WTC11 (cell line): ENCODE measurements at regions of chr19 and their contacts with region 1.

Region 1: GRCh38 chr19:23273590-23274413 is 23.6 kb upstream of the ZNF724 start:
- DNase-seq: peak; percentile 96
- ATAC-seq: peak; percentile 99
- H3K4me3 Mint-ChIP-seq: peak overlapping the region; percentile 90
- H3K27ac Mint-ChIP-seq: peak overlapping the region; percentile 96
- H3K4me1 Mint-ChIP-seq: peaks cover 29% of the 10 kb centered on the region
- H3K27me3 Mint-ChIP-seq: no peaks in the 10 kb centered on the region
- CTCF ChIP-seq: no peak

Region 2: GRCh38 chr19:23075031-23075760 is 198.6 kb before region 1 on chr19:
- CTCF ChIA-PET with region 1: interaction called, 4 read pairs
- POLR2A ChIA-PET with region 1: interaction called, 18 read pairs
- DNase-seq: peak; percentile 92
- ATAC-seq: peak; percentile 92
- H3K4me3 Mint-ChIP-seq: peak overlapping the region; percentile 83
- H3K27ac Mint-ChIP-seq: peak overlapping the region; percentile 91
- H3K4me1 Mint-ChIP-seq: peaks cover 30% of the 10 kb centered on the region
- H3K27me3 Mint-ChIP-seq: peaks cover 11% of the 10 kb centered on the region
- CTCF ChIP-seq: no peak

Region 3: GRCh38 chr19:23116802-23117571 is 156.8 kb before region 1 on chr19 and contains the start of gene ZNF730:
- CTCF ChIA-PET with region 1: no interaction called
- POLR2A ChIA-PET with region 1: interaction called, 15 read pairs
- DNase-seq: peak; percentile 84
- ATAC-seq: peak; percentile 88
- H3K4me3 Mint-ChIP-seq: peak within 1 kb of the TSS; percentile 90
- H3K27ac Mint-ChIP-seq: peak within 1 kb of the TSS; percentile 99
- H3K4me1 Mint-ChIP-seq: peaks cover 24% of the 10 kb centered on the region
- H3K27me3 Mint-ChIP-seq: no peaks in the 10 kb centered on the region
- CTCF ChIP-seq: no peak
- total RNA-seq, gene ZNF730: 32.2 to 38.0 TPM (median 32.6 TPM) in 3 replicates

Region 4: DNA sequence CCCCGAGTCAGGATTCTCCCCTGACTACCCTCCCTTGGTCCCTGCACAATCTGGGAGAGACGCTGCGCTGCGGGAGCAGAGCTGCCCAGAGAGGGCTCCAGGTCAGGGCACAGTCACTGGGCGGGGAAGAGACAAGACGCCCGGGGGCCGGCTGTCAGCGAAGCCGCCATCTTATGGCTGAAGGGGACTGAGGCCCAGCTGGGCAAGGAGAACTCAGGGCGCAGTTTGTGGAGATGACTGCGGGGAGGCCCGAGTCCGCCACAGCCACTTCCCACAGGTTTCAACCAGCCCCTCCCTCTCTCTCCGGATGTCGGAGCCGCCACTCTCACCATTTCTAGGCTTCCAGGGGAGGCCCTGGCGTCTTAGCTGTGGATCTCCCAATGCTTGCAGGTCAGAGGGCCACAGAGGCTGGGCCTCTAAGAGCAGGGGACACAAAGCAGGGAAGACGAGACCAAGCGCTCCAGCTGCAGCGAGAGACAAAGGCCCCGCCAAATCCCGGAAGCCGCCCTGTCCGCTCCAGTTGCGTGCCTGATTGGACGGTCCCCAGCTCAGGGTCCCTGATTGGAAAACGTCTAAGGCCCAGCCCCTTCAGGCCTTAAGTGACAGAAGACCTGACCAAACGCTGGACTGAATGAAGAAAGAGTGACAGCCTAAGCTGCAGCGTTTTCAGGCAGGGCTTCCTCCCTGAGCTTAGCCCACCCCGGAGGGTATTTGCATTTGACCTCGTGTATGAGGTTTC is 23.7 kb before region 1 on chr19 and contains the start of gene ZNF724:
- CTCF ChIA-PET with region 1: interaction called, 6 read pairs
- POLR2A ChIA-PET with region 1: interaction called, 42 read pairs
- DNase-seq: peak; percentile 95
- ATAC-seq: peak; percentile 100
- H3K4me3 Mint-ChIP-seq: peak within 1 kb of the TSS; percentile 98
- H3K27ac Mint-ChIP-seq: peak within 1 kb of the TSS; percentile 100
- H3K4me1 Mint-ChIP-seq: peaks cover 28% of the 10 kb centered on the region
- H3K27me3 Mint-ChIP-seq: no peaks in the 10 kb centered on the region
- CTCF ChIP-seq: no peak
- total RNA-seq, gene ZNF724: 47.9 to 59.0 TPM (median 48.2 TPM) in 3 replicates

Region 5: GRCh38 chr19:23415561-23416191 is 141.9 kb after region 1 on chr19:
- CTCF ChIA-PET with region 1: interaction called, 3 read pairs
- POLR2A ChIA-PET with region 1: interaction called, 11 read pairs
- DNase-seq: peak; percentile 90
- ATAC-seq: peak; percentile 94
- H3K4me3 Mint-ChIP-seq: peak overlapping the region; percentile 92
- H3K27ac Mint-ChIP-seq: peak overlapping the region; percentile 90
- H3K4me1 Mint-ChIP-seq: peaks cover 21% of the 10 kb centered on the region
- H3K27me3 Mint-ChIP-seq: peaks cover 7% of the 10 kb centered on the region; the same call in 1 of the 2 replicates
- CTCF ChIP-seq: no peak